ENCODE measurements at regions of chr12 and their contacts with region 1.

Region 1: DNA sequence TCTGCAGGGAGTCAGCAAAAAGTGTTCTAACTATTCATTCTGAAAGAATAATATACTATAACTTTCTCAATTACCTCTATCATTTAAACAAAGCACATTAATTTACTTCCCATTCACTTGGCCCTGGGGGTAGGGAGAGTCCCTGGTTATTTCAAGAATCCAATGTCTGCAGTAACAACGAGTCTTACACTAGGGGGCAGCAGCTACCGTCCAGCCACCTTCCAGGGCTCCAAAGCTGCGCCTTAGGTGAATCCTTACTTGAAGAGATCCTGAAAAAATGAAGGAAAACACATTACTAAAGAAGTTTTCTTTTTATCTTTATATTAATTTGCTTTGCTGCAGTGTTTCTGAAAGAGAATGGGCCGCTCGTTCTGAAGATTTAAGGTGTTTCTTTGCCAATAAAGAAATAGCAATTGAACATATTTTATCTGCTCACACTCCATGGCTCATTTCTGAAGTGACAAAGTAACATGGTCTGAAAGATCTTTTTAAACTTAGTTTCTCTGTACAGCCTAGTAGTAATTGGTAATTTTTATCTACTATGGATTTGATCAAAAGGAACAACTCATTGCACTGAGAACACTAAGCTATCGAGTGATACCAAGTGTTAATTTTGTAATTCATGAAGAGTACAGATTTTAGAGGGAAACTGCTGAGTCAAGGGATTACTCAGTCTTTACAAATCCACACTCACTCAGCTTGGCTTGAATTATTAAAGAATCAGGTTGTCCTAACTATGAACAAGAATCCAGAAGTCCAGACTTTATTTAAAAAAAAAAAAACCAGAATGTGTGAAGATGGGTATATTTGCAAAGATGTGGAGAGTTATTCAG is 27.6 kb downstream of the BHLHE41 start:
- DNase-seq: peak; percentile 69 to 78 (median 74)
- ATAC-seq: peak; percentile 93
- H3K4me3 ChIP-seq: no peak overlapping the region
- H3K27ac ChIP-seq: no peak overlapping the region
- H3K4me1 ChIP-seq: no peaks in the 10 kb centered on the region
- H3K27me3 ChIP-seq: peaks cover 0 to 4% of the 10 kb centered on the region in 2 experiments; a peak in 1 of 5 replicates
- CTCF ChIP-seq: peak; percentile 77 to 89 (median 87)
- EP300 ChIP-seq: no peak
- POLR2A ChIP-seq: no peak
- RAD21 ChIP-seq: peak; percentile 86 to 91

Region 2: DNA sequence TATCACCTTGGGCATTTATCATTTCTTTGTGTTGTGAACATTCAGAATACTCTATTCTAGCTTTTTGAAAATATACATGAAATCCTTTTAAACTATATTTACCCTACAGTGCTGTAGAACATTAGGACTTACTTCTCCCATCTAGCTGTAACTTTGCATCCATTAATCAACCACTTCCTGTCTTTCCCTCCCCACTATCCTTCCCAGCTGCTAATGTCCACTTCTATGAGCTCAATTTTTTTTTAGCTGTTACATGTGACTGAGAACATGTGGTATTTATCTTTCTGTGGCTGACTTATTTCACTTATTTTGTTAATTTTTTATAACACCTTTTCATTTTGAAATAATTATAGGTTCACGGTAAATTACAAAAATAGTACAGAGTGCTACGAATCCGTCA is 680.2 kb before region 1 on chr12:
- CTCF ChIA-PET with region 1: no interaction called
- POLR2A ChIA-PET with region 1: no interaction called
- in situ Hi-C with region 1: no loop called
- intact Hi-C with region 1: no loop called
- DNase-seq: no peak
- ATAC-seq: no peak
- H3K4me3 ChIP-seq: no peak overlapping the region
- H3K27ac ChIP-seq: no peak overlapping the region
- H3K4me1 ChIP-seq: no peaks in the 10 kb centered on the region
- H3K27me3 ChIP-seq: peaks cover 0 to 1% of the 10 kb centered on the region in 2 experiments; a peak in 1 of 5 replicates
- CTCF ChIP-seq: no peak
- EP300 ChIP-seq: no peak
- POLR2A ChIP-seq: no peak
- RAD21 ChIP-seq: no peak

Region 3: GRCh38 chr12:26523708-26524150 is 426.5 kb after region 1 on chr12:
- CTCF ChIA-PET with region 1: interaction called, 4 read pairs
- POLR2A ChIA-PET with region 1: no interaction called
- in situ Hi-C with region 1: no loop called
- intact Hi-C with region 1: loop called (anchors 10 kb)
- DNase-seq: no peak
- ATAC-seq: no peak
- H3K4me3 ChIP-seq: no peak overlapping the region
- H3K27ac ChIP-seq: no peak overlapping the region
- H3K4me1 ChIP-seq: no peaks in the 10 kb centered on the region
- H3K27me3 ChIP-seq: no peaks in the 10 kb centered on the region
- CTCF ChIP-seq: no peak
- EP300 ChIP-seq: no peak
- POLR2A ChIP-seq: no peak
- RAD21 ChIP-seq: no peak

Region 4: DNA sequence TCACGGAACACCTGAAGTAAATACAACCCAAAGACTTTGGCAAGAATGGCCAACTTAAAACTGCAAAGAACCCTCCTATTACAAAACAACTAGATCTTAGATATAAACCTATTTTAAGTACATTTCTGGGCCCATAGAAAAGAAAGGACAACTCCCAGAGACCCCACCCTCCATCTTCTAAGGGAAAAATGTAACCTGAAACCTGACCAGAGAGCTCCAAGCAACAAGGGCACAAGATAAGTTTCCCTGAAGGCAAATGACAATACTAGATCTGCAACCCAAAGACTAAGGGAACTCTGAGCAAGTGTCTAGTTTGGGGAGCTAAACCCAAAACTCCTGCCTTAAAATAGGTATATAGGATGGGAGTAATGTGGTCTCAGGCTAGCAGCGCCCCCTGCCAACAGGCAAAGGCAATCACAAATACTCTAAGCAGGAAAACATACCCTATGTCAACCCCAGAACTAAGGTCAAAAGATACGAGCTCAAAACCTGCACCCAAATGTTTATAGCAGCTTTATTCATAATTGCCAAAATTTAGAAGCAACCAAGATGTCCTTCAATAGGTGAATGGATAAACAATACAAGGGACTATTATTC is 516.9 kb after region 1 on chr12:
- CTCF ChIA-PET with region 1: no interaction called
- POLR2A ChIA-PET with region 1: no interaction called
- in situ Hi-C with region 1: no loop called
- intact Hi-C with region 1: loop called (anchors 5 kb)
- DNase-seq: peak; percentile 11 to 44 (median 18)
- ATAC-seq: peak; percentile 89
- H3K4me3 ChIP-seq: no peak overlapping the region
- H3K27ac ChIP-seq: no peak overlapping the region
- H3K4me1 ChIP-seq: no peaks in the 10 kb centered on the region; a peak in 1 of 5 replicates
- H3K27me3 ChIP-seq: no peaks in the 10 kb centered on the region
- CTCF ChIP-seq: peak; percentile 59 to 74 (median 70)
- EP300 ChIP-seq: no peak
- POLR2A ChIP-seq: no peak
- RAD21 ChIP-seq: peak; percentile 60 to 76

Region 5: GRCh38 chr12:26651566-26652188 is 554.4 kb after region 1 on chr12:
- CTCF ChIA-PET with region 1: interaction called, 8 read pairs
- POLR2A ChIA-PET with region 1: no interaction called
- in situ Hi-C with region 1: no loop called
- intact Hi-C with region 1: loop called (anchors 2 kb)
- DNase-seq: peak; percentile 70 to 72 (median 70)
- ATAC-seq: peak; percentile 88
- H3K4me3 ChIP-seq: no peak overlapping the region
- H3K27ac ChIP-seq: no peak overlapping the region
- H3K4me1 ChIP-seq: no peaks in the 10 kb centered on the region
- H3K27me3 ChIP-seq: no peaks in the 10 kb centered on the region
- CTCF ChIP-seq: peak; percentile 78 to 83 (median 80)
- EP300 ChIP-seq: no peak
- POLR2A ChIP-seq: no peak
- RAD21 ChIP-seq: peak; percentile 87 to 96

Region 6: DNA sequence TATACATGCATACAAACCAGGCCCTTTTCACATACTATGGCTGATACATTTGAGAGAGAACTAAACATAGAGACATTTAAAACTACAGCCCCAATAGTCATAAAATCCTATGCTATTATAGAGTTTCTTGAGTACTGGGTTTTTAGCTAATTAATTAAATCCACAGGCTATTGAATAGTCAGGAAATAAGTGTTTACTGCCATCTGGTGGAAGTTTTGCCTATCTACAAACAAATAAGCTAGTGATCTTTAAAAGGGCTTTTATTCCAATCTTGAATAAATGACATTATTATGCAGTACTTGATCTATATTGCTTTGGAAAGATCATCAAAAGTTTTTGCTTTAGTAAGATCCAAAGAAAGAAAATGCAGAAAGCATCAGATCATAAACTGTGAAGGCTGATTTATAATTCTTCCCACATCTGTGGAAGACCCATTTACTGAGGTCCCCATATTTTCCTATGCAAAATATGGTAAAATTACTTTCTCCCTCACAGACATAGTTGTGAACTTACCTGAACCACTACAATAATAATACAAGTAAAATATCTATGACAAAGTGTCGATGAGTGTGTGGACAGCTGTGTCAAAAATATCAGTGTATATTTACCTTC is 604.4 kb after region 1 on chr12:
- CTCF ChIA-PET with region 1: interaction called, 10 read pairs
- POLR2A ChIA-PET with region 1: no interaction called
- in situ Hi-C with region 1: no loop called
- intact Hi-C with region 1: loop called (anchors 10 kb)
- DNase-seq: peak in 3 of 4 experiments; percentile 10 to 52 (median 14)
- ATAC-seq: peak; percentile 79
- H3K4me3 ChIP-seq: no peak overlapping the region
- H3K27ac ChIP-seq: no peak overlapping the region
- H3K4me1 ChIP-seq: peaks cover 0 to 7% of the 10 kb centered on the region in 2 experiments; a peak in 3 of 5 replicates
- H3K27me3 ChIP-seq: peaks cover 0 to 3% of the 10 kb centered on the region in 2 experiments; a peak in 2 of 5 replicates
- CTCF ChIP-seq: peak in 2 of 3 experiments; percentile 40 to 77; a peak in 4 of 6 replicates
- EP300 ChIP-seq: no peak
- POLR2A ChIP-seq: no peak
- RAD21 ChIP-seq: peak; percentile 91 to 94

Measured in K562 (cell line).